ENCODE measurements at regions of chr10 and their contacts with region 1.

Region 1: DNA sequence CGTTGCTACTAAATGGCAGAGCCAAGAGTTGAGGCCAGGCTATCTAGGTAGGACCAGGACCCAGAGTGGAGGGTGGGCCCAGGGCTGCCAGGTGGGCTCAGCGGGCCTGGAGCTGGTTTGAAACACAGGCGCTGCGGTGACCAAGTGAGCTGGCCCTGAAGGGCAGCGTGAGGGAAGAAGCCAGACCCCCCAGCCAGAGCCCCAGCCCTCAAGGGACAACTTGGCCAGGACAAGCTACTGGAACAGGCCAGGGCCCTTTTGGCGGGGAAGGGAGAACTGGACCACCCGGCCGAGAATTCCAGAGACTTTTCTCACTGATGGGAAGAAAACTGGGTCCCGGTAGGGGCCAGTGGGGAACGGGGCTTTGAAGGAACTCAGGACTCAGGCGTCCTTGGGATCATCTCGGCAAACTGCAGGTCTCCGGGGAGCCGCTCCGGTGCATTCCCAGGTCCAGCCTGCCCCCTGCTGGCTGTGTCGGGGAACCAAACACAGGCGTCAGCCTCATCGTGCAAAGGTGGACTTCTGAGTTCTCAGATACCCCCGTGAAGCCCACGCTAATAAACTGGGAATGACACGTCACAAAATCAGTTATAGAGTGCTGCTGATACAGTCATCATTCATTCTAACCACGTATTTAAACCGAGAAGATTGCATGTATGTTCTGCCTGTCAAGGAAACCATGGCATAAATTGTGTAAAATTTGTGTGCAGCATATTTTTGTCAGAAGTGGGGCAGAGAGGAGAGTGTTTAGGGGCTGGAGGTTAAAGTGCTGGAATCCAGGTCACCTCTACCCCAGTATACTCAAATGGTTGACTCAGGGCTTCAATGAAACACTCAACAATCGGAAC is 76.0 kb upstream of the CPXM2 start:
- DNase-seq: peak; percentile 45 to 66 (median 60)
- H3K4me3 ChIP-seq: no peak overlapping the region
- H3K27ac ChIP-seq: no peak overlapping the region
- H3K4me1 ChIP-seq: peaks cover 0 to 14% (median 7%) of the 10 kb centered on the region in 4 experiments
- H3K27me3 ChIP-seq: peaks cover 2 to 68% (median 29%) of the 10 kb centered on the region in 5 experiments

Region 2: DNA sequence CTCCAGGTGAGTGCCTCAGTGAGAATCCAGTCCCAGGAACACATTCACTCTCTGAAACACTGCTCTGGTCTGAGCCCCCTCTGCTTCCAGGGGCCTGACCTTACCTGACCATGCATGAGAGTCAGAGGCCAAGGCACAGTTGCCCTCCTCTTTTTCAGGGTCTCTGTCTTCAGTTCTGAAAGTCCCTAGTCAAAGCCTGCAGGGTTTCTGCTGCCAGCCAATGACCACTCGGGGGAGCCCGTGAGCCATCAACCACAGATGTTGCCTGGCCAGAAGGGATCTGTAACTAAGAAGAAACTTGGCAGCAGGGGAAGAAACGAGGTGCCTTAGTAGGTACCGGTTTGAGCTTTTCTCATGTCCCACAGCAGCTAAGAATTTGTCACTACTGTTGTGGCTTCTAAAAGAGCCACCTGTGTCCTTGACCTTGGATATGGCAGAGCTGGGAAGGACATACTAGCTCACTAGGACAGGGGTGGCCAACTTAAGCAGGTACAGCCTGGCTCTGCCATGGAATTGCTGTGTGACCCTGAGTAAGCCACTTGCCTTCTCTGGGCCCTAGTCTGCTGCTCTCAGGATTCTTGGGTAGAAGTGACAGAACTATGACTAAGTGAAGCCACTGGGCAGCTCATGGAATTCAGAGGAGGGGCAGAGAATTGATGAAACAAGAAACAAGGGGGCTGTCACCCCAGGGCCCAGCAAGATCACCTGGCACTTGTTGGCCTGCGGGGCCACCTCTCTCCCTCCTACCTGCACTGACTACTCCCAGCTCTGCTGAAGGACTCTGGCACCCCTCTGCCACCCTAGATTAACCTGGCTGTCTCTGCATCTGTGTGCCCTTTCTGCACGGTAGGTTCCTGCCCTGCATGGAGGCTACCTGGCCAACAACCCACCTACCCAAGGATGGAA is 385.3 kb before region 1 on chr10:
- CTCF ChIA-PET with region 1: interaction called, 128 read pairs
- POLR2A ChIA-PET with region 1: interaction called, 3 read pairs
- DNase-seq: peak; percentile 58 to 85 (median 80)
- H3K4me3 ChIP-seq: no peak overlapping the region
- H3K27ac ChIP-seq: no peak overlapping the region
- H3K4me1 ChIP-seq: no peaks in the 10 kb centered on the region
- H3K27me3 ChIP-seq: peaks cover 0 to 52% (median 10%) of the 10 kb centered on the region in 5 experiments

Region 3: DNA sequence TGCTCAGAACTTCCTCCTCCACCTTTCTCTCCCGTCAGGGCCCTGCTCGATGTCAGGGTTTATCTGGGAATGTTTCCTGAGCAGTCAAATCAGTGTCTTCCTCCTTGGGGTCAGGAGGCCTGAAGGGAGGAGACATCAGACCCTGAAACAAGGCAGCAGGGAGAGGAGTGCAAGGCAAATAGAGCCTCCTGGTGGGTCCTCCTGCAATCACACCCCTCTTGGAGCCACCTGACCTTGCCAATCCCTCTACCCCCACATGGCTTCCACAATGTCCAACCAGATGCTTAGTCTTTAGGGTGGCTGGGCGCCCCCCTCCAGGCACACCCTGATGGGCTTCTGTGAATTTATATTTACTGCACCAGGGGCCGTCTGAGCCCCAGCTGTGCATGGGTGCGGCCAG is 289.2 kb before region 1 on chr10:
- CTCF ChIA-PET with region 1: no interaction called
- POLR2A ChIA-PET with region 1: no interaction called
- DNase-seq: no peak
- H3K4me3 ChIP-seq: no peak overlapping the region
- H3K27ac ChIP-seq: no peak overlapping the region
- H3K4me1 ChIP-seq: no peaks in the 10 kb centered on the region
- H3K27me3 ChIP-seq: peaks cover 0 to 15% (median 3%) of the 10 kb centered on the region in 5 experiments